CD4-positive, alpha-beta memory T cell (primary cell): ENCODE measurements at regions of chr19 and their contacts with region 1.

Region 1: DNA sequence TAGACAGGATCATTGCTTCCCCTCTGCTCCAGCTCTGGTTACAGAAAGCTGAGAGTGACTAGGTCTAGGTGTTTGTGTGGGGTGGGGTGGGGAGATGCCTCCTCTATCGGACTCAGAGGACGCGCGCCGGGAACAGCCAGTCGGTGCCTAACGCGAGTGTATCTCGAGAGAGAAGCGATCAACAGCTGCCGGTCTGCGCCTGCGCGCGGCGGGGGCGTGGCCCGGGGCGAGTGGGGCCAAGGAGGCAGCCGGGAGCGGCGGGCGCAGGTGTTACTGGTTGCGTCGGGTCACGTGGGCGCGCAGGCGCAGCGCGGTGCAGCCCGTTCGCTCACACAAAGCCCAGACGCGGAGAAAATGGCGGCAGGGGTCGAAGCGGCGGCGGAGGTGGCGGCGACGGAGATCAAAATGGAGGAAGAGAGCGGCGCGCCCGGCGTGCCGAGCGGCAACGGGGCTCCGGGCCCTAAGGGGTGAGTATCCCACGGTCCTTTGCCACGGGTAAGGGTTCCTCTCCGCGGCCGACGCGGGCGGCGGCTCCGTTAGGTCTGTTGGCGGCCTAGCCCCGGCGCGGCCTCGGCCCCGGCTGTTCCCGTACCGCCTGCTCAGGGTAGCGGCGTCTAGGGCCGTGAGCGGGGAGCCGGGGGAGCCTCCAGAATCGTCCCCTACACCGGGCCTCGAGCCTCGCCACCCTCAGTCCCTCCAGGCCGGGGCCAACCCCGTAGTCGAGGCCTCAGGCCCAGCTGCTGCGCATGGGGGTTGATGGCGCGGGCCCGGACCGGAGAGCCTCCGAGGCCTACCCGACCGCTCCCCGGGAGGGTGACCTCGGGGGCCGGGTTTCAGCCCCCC is at the start of gene HNRNPM:
- DNase-seq: peak; percentile 99 to 100 (median 100)
- H3K4me3 ChIP-seq: peak within 1 kb of the TSS; percentile 26 to 85
- H3K4me3 Mint-ChIP-seq: peak within 1 kb of the TSS; percentile 95 to 99 (median 97)
- H3K27ac ChIP-seq: peak within 1 kb of the TSS; percentile 99
- H3K27ac Mint-ChIP-seq: peak within 1 kb of the TSS; percentile 91 to 99 (median 98)
- H3K4me1 ChIP-seq: peaks cover 40% of the 10 kb centered on the region
- H3K4me1 Mint-ChIP-seq: peaks cover 28 to 51% (median 36%) of the 10 kb centered on the region in 4 donors
- H3K27me3 ChIP-seq: no peaks in the 10 kb centered on the region
- H3K27me3 Mint-ChIP-seq: no peaks in the 10 kb centered on the region
- total RNA-seq, gene HNRNPM: 197 to 199 TPM

Region 2: GRCh38 chr19:8307965-8308866 is 136.7 kb before region 1 on chr19 and contains the start of gene CD320:
- CTCF ChIA-PET with region 1: no interaction called
- POLR2A ChIA-PET with region 1: no interaction called
- intact Hi-C with region 1: loop called (anchors 1 kb)
- DNase-seq: peak; percentile 88 to 90 (median 89)
- H3K4me3 ChIP-seq: peak within 1 kb of the TSS; percentile 71 to 97
- H3K4me3 Mint-ChIP-seq: peak within 1 kb of the TSS; percentile 91 to 95 (median 92)
- H3K27ac ChIP-seq: peak within 1 kb of the TSS; percentile 74
- H3K27ac Mint-ChIP-seq: peak within 1 kb of the TSS; percentile 89 to 99 (median 96)
- H3K4me1 ChIP-seq: peaks cover 39% of the 10 kb centered on the region
- H3K4me1 Mint-ChIP-seq: peaks cover 12 to 43% (median 28%) of the 10 kb centered on the region in 4 donors
- H3K27me3 ChIP-seq: no peaks in the 10 kb centered on the region
- H3K27me3 Mint-ChIP-seq: no peaks in the 10 kb centered on the region
- total RNA-seq, gene CD320: 29.6 to 29.7 TPM

Region 3: DNA sequence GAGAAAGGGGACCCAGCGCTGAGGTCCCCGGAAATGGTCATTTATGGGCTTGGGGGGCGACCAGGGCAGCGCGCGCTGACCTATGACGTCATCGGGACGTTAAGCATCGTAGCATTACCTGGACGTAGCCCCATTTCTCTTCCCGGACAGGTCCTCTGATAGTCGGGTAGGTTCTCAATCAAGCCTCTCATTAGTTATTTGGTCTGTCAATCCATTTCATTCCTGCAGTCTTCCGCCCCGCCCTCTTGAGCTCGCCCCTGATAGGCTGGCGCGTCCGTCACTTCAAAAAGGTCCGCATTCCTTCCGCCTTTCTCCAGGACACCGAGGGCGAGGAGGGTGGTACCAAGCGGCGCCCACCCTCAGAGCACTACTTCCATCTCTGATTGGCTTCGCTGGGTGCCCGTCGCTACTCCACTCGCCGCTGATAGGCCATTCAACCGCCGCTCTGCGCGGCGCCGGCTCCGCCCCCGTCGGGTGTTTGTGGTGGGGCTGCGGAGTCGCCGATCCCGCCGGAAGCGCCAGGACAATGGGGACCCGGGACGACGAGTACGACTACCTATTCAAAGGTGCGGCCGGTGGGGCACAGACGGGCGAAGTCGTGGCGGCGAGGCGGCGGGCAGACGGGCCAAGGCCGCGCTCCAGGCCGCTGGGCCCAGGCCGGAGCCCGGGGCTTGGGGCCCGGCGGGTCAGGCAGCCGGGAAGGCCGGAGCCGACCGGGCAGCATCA is 54.8 kb before region 1 on chr19 and contains the start of gene RAB11B:
- CTCF ChIA-PET with region 1: no interaction called
- POLR2A ChIA-PET with region 1: interaction called, 7 read pairs
- intact Hi-C with region 1: loop called (anchors 1 kb)
- DNase-seq: peak; percentile 96 to 99 (median 99)
- H3K4me3 ChIP-seq: peak within 1 kb of the TSS; percentile 65 to 81
- H3K4me3 Mint-ChIP-seq: peak within 1 kb of the TSS; percentile 89 to 97 (median 93)
- H3K27ac ChIP-seq: peak within 1 kb of the TSS; percentile 96
- H3K27ac Mint-ChIP-seq: peak within 1 kb of the TSS; percentile 91 to 99 (median 97)
- H3K4me1 ChIP-seq: peaks cover 22% of the 10 kb centered on the region
- H3K4me1 Mint-ChIP-seq: peaks cover 9 to 37% (median 29%) of the 10 kb centered on the region in 4 donors
- H3K27me3 ChIP-seq: no peaks in the 10 kb centered on the region
- H3K27me3 Mint-ChIP-seq: no peaks in the 10 kb centered on the region
- total RNA-seq, gene RAB11B: 107 to 109 TPM

Region 4: DNA sequence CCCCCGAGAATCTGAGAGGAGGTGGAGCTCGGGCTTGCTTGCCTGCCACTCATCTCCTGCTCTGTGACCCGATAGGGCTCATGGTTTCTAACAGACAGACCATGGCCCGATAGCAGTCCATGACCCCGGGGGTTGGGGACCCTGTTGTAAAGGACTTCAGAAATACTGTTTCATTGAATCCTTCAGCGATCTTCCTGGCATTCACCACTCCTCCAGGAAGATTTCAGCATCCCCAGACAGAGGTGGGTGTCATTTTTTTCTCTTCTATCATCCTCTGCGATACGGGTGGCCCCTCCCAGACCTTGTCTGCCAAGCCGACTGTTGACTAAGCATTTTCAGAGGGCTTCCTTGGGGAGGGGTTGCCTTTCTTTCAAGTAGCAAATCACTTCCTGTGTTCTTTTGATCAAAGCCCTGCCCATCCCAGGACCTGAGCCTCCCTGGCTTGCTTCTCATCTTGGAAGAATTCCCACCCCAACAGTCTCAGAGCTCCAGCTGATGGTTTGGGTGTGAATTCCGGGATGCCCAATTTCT is 130.7 kb after region 1 on chr19:
- CTCF ChIA-PET with region 1: interaction called, 21 read pairs
- POLR2A ChIA-PET with region 1: interaction called, 13 read pairs
- intact Hi-C with region 1: no loop called
- DNase-seq: peak; percentile 61 to 82 (median 72)
- H3K4me3 ChIP-seq: peak overlapping the region; percentile 78 to 93
- H3K4me3 Mint-ChIP-seq: peak overlapping the region; percentile 91 to 99 (median 98)
- H3K27ac ChIP-seq: peak overlapping the region; percentile 58
- H3K27ac Mint-ChIP-seq: peak overlapping the region; percentile 92 to 99 (median 94)
- H3K4me1 ChIP-seq: peaks cover 80% of the 10 kb centered on the region
- H3K4me1 Mint-ChIP-seq: peaks cover 40 to 97% (median 63%) of the 10 kb centered on the region in 4 donors
- H3K27me3 ChIP-seq: no peaks in the 10 kb centered on the region
- H3K27me3 Mint-ChIP-seq: no peaks in the 10 kb centered on the region

Region 5: DNA sequence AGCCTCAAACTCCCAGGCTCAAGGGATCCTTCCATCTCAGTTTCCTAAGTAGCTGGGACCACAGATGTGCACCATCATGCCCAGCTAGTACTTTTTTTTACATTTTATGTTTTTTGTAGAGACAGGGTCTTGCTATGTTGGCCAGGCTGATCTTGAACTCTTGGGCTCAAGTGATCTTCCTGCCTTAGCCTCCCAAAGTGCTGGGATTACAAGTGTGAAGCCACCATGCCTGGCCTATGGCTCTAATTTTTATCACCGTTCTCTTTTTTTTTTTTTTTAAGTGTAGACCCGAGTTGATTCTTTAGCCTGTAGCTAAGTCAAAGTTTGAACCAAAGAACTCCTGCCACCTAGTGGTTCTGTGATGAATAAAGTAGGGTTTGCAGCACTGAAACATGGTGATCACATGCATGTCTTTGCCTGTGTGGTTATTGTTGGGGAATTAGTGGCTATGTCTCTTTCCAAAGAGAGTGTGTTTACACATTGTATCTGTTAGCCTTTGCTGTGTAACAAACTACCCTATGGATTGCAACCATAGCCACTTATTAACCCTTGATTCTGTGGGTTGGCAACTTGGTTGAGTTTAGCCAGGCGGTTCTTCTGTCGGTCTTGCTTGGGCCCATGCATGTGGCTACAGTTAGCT is 197.2 kb after region 1 on chr19:
- CTCF ChIA-PET with region 1: no interaction called
- POLR2A ChIA-PET with region 1: no interaction called
- intact Hi-C with region 1: no loop called
- DNase-seq: peak in 4 of 5 donors; percentile 44 to 53 (median 48)
- H3K4me3 ChIP-seq: no peak overlapping the region
- H3K4me3 Mint-ChIP-seq: no peak overlapping the region
- H3K27ac ChIP-seq: no peak overlapping the region
- H3K27ac Mint-ChIP-seq: no peak overlapping the region
- H3K4me1 ChIP-seq: no peaks in the 10 kb centered on the region
- H3K4me1 Mint-ChIP-seq: peaks cover 0 to 4% (median under 1%) of the 10 kb centered on the region in 4 donors
- H3K27me3 ChIP-seq: no peaks in the 10 kb centered on the region
- H3K27me3 Mint-ChIP-seq: peaks cover 16 to 19% of the 10 kb centered on the region in 2 donors